ENCODE measurements at regions of chr3 and their contacts with region 1.

Region 1: DNA sequence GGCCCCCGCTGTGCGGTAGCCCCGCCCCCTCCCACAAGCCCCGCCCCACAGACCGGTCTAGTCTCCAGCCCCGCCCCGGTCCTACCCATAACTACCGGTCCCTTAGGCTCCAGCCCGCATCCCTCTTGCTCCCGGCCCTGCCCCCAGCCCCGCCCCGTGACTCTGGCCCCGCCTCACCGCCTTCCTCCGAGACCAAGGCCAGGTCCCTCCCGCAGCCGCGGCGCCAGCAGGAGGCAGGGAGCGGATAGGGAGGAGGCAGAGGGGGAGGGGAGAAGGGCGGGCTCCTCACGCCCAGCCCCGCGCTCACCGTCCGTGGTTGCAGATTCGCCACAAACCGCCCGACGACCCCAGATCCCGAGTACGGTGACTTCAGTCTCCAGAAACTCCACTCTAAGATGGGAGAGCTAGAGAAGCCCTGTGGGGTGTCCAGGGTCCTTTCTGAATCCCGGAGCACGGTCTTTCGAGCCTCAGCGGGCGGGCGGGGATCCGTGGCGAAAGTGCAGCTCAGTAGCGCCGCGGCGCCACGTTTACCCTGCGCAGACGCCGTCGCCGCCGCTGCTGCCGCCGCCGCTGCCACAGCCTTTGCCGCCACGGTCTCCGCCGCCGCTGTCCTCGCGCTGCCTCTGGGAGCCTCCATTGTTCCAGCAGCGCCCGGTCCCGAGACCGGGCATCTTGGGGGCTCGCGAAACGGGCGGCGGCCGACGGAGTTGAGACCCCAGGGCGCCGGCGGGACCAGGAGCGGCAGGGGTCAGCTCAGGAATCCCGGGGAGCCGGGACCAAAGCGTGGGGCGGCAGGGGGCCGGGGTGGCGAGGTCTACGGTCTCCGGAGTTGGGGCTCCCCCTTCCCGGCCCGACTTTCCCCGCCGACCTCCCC is at the start of gene BRPF1:
- DNase-seq: peak; percentile 99 to 100
- ATAC-seq: peak; percentile 97 to 99 (median 99)
- H3K4me3 ChIP-seq: peak within 1 kb of the TSS; percentile 91 to 100 (median 98)
- H3K27ac ChIP-seq: peak within 1 kb of the TSS; percentile 93 to 100 (median 99)
- H3K4me1 ChIP-seq: peaks cover 0 to 50% (median 22%) of the 10 kb centered on the region in 9 donors
- H3K27me3 ChIP-seq: no peaks in the 10 kb centered on the region
- CTCF ChIP-seq: peak in 3 of 9 donors; percentile 6 to 31 (median 24)
- total RNA-seq, gene BRPF1: 7.3 to 15.1 (median 9.1) TPM

Region 2: DNA sequence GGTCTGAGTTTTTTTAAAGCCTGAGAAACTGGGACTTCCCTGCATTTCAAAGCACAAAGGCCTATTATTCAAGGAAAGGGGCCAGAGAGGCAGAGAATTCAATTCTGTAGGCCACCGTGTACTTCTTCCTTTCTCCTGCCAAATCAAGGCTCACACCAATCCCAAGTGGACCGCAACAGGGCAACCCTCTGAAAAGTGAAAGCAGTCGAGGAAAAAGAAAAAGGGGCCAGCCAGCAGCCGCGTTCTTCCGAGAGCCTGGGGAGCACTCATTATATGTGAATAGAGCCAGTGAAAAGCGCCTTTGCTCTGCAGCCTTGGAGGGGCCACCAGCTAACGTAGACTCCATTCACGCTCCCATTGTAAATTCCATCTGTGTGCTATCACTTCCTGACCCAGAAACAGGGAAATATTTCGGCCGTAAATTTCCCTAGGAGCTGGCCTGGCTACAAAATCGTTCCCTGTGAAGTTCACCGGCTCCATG is 414.5 kb before region 1 on chr3:
- intact Hi-C with region 1: no loop called
- DNase-seq: peak in 1 of 2 donors; percentile 17
- ATAC-seq: peak; percentile 36 to 87 (median 72)
- H3K4me3 ChIP-seq: peak overlapping the region in 8 of 10 donors; percentile 17 to 48 (median 36)
- H3K27ac ChIP-seq: peak overlapping the region; percentile 50 to 79 (median 72)
- H3K4me1 ChIP-seq: peaks cover 0 to 23% (median 4%) of the 10 kb centered on the region in 9 donors
- H3K27me3 ChIP-seq: no peaks in the 10 kb centered on the region
- CTCF ChIP-seq: no peak

Region 3: DNA sequence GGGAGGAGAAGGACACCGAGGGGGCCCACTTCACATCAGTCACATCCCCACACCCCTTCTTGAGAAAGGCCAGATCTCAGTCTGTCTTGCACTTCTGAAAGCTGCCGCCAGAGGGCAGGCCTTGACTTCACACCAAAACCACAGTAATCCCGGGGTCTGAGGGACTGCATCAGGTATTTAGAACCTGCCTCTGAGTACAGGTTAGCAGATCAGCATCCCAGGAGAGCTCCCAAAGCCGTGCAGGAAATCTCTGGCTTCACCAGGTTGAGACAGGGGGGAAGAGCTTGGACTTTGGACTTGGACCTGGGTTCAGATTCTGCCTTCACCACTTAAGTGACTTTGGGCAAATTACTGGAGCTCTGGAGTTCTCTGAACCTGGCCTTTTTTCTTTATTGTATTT is 228.2 kb before region 1 on chr3:
- intact Hi-C with region 1: loop called in 2 of 10 experiments (anchors 5 to 10 kb)
- DNase-seq: peak; percentile 38 to 60
- ATAC-seq: peak in 4 of 8 donors; percentile 23 to 35 (median 33)
- H3K4me3 ChIP-seq: no peak overlapping the region
- H3K27ac ChIP-seq: no peak overlapping the region
- H3K4me1 ChIP-seq: peaks cover 0 to 14% (median 10%) of the 10 kb centered on the region in 9 donors
- H3K27me3 ChIP-seq: peaks cover 0 to 44% (median 27%) of the 10 kb centered on the region in 7 donors
- CTCF ChIP-seq: peak; percentile 68 to 92 (median 86)

Region 4: GRCh38 chr3:9649791-9650521 is 81.5 kb before region 1 on chr3:
- intact Hi-C with region 1: loop called in 1 of 10 experiments (anchors 2 kb)
- DNase-seq: no peak
- ATAC-seq: peak in 2 of 8 donors; percentile 1 to 24
- H3K4me3 ChIP-seq: peak overlapping the region; percentile 68 to 100 (median 92)
- H3K27ac ChIP-seq: peak overlapping the region; percentile 76 to 96 (median 90)
- H3K4me1 ChIP-seq: peaks cover 19 to 48% (median 43%) of the 10 kb centered on the region in 9 donors
- H3K27me3 ChIP-seq: no peaks in the 10 kb centered on the region
- CTCF ChIP-seq: no peak

Region 5: GRCh38 chr3:9749645-9750555 is 18.5 kb after region 1 on chr3 and contains the start of gene OGG1:
- intact Hi-C with region 1: loop called in 2 of 10 experiments (anchors 1 to 2 kb)
- DNase-seq: peak; percentile 98
- ATAC-seq: peak; percentile 97 to 99 (median 98)
- H3K4me3 ChIP-seq: peak within 1 kb of the TSS; percentile 54 to 80 (median 66)
- H3K27ac ChIP-seq: peak within 1 kb of the TSS; percentile 70 to 95 (median 91)
- H3K4me1 ChIP-seq: peaks cover 2 to 37% (median 30%) of the 10 kb centered on the region in 9 donors
- H3K27me3 ChIP-seq: no peaks in the 10 kb centered on the region
- CTCF ChIP-seq: peak in 4 of 9 donors; percentile 7 to 34 (median 20)
- total RNA-seq, gene OGG1: 5.2 to 10.8 (median 8.0) TPM

Region 6: GRCh38 chr3:9792405-9793160 is 61.1 kb after region 1 on chr3 and contains the starts of genes ARPC4 and TADA3:
- intact Hi-C with region 1: loop called in 2 of 10 experiments (anchors 2 to 5 kb)
- DNase-seq: peak; percentile 94
- ATAC-seq: peak; percentile 93 to 97 (median 94)
- H3K4me3 ChIP-seq: peak within 1 kb of the TSS; percentile 63 to 100 (median 80)
- H3K27ac ChIP-seq: peak within 1 kb of the TSS; percentile 91 to 98 (median 97)
- H3K4me1 ChIP-seq: peaks cover 5 to 51% (median 35%) of the 10 kb centered on the region in 9 donors
- H3K27me3 ChIP-seq: no peaks in the 10 kb centered on the region
- CTCF ChIP-seq: peak in 1 of 9 donors; percentile 20
- total RNA-seq, gene ARPC4: 40.6 to 111 (median 55.0) TPM
- total RNA-seq, gene TADA3: 38.5 to 59.6 (median 42.9) TPM